ENCODE measurements at regions of chr5 and their contacts with region 1.

Region 1: DNA sequence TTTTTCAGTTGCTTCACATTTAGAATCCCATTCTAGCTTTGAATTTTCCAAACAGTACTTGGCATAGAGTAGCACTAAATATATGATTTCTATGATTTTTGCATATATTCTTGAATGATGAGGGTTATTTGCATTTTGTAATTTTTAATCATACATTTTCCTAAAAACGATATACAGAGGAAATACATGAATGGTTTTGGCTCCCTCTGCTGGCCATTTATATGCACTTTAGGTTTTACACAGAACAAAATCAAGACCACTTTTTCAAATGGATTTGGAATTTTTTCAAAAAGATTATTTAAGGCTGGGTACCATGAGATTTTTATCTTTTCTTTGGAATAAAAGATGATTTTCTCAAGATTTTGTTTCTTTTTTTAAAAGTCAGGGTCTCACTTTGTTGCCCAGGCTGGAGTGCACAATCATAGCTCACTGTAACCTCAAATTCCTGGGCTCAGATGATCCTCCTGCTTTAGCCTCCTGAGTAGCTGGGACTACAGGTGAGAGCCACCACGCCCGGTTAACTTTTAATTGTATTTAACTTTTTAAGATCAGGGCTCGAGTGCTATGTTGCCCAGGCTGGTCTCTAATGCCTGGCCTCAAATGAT is 16.7 kb upstream of the COMMD10 start:
- DNase-seq: no peak
- ATAC-seq: peak in 1 of 2 donors; percentile 55

Region 2: GRCh38 chr5:115634343-115635132 is 433.6 kb before region 1 on chr5:
- intact Hi-C with region 1: loop called in 1 of 2 experiments (anchors 2 kb)
- DNase-seq: peak; percentile 91
- ATAC-seq: peak; percentile 96 to 98

Region 3: GRCh38 chr5:115888027-115888426 is 180.1 kb before region 1 on chr5:
- intact Hi-C with region 1: loop called in 1 of 2 experiments (anchors 5 kb)
- DNase-seq: no peak
- ATAC-seq: peak in 1 of 2 donors; percentile 44

Region 4: DNA sequence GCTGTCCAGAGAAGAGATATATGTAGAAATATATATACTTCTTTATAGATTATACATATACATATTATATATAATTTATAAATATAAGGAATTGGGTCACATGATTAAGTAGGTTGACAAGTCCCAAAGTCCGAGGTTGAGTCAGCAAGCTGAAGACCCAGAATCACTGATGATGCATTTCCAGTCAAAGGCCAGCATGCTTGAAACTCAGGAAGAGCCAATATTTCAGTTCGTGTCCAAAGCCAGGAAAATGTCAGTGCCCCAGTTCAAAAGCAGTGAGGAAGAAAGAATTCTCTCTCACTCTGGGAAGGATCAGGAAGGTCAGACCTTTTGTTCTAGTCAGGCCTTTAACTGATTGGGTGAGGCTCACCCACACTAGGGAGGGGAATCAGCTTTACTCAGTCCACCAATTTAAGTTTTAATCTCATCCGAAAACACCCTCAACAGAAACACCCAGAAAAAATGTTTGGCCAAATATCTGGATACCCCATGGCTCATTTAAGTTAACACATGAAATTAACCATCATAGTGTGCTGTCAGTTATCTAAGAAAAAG is 147.9 kb before region 1 on chr5:
- intact Hi-C with region 1: no loop called
- DNase-seq: no peak
- ATAC-seq: no peak

Region 5: GRCh38 chr5:116023619-116024018 is 44.5 kb before region 1 on chr5:
- intact Hi-C with region 1: no loop called
- DNase-seq: no peak
- ATAC-seq: no peak

Measured in left cardiac atrium (tissue), 4 donors.